Posterior vena cava (tissue), 2 donors: ENCODE measurements at regions of chr22 and their contacts with region 1.

Region 1: DNA sequence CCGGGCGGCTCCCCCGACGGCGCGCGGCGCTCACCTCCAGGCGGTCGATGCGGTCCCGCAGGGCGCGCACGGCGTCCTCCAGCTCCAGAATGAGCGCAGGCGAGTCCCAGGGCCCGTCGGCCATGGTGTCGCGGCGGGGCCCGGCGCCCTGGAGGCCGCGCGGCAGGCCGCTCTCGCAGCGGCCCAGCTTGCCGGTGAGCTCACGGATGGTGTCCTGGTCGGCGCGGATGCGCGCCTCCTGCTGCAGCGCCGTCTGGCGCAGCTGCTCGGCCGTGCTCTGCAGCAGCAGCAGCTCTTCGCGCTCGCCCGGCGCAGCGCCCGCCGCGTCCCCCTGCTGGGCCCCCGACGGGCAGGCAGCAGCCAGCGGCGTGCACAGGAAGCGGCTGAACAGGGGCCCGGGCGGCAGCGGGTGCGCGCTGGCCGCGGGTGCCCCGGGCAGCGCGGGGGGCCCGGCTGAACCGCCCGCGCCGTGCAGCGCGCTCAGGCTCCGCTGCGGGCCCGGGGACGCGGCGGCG is 570 bp downstream of the NPTXR start:
- DNase-seq: no peak

Region 2: DNA sequence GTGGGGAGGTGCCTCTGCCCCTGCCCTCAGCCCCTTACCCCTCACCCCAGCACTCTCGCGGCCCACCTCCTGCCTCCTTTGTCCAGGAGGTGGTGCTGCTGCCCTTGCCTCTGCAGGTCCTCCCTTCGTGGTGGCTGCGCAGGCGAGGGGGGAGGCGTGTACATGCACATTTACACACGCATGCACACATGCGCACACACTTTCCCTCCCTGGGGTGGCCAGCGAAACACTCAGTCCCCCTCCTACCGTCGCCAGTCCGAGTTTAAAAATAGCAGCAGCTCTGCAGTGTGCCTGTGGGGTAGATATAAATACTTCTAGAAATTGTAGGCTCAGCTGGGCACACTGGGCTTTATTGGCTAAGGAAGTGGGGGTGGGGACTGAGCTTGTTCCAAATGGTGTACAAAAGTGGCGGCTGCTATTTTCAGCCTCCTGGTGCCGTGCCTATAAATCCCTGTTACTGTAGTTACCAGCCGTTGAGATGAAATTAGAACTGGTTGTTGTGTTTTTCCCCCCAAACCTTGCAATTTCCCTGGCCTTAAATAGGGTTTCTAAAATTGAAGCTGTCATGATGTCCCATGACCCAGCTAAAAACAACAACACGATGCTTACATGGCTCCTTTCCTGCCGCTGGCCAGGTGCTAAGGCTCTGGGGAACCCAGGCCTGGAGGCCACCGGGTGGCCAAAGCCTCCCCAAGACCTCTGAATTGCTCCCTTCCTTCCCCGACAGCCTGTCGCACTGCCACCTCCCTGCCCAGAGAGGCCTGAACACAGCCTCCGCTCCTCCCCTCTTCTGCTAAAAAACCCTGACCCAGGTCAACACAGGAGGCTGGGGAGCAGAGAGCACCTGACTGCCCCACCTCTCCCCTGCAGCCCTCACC is 773.6 kb before region 1 on chr22:
- intact Hi-C with region 1: no loop called
- DNase-seq: peak; percentile 85

Region 3: GRCh38 chr22:38766076-38766777 is 77.0 kb before region 1 on chr22:
- intact Hi-C with region 1: loop called (anchors 5 to 10 kb)
- DNase-seq: no peak

Region 4: DNA sequence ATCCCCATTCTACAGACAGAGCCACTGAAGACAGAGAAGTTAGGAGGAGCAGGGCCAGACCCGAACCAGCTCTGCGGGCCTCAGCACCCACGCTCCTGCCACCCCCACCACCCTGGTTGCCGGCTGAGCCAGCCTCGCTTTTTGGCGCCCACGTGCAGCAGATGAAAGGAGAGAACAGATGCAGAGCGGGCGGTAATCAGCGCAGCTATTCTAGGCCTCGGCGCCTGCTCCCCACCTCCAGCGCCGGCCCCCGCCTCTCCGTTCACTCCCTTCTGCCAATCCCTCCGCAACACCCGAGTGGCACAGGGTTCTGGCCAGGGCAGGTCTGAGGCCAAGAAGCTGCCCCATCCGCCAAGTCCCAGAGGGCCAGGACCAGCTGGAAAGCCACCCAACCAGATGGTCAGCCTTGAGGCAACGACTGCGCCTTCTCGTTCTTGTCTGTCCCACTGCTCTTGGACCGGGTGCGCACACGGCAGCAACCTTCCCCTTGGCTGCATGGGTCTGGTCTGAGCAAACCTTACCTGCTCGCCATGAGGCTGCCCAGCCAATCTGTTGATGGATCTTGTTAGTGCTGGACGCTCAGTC is 66.1 kb before region 1 on chr22:
- intact Hi-C with region 1: loop called in 1 of 2 experiments (anchors 10 kb)
- DNase-seq: no peak